Ascending aorta (tissue), 2 donors: ENCODE measurements at regions of chr16 and their contacts with region 1.

Region 1: GRCh38 chr16:10181196-10182162 is 749 bp downstream of the GRIN2A start:
- DNase-seq: peak in 1 of 2 donors; percentile 75
- H3K4me3 ChIP-seq: peak overlapping the region; percentile 32 to 59
- H3K27ac ChIP-seq: no peak overlapping the region
- H3K4me1 ChIP-seq: peaks cover 0 to 21% of the 10 kb centered on the region in 2 donors
- H3K27me3 ChIP-seq: no peaks in the 10 kb centered on the region
- CTCF ChIP-seq: peak; percentile 86 to 96 (median 89)

Region 2: GRCh38 chr16:9297437-9298113 is 883.9 kb before region 1 on chr16:
- intact Hi-C with region 1: loop called (anchors 2 kb)
- DNase-seq: no peak
- H3K4me3 ChIP-seq: no peak overlapping the region
- H3K27ac ChIP-seq: no peak overlapping the region
- H3K4me1 ChIP-seq: no peaks in the 10 kb centered on the region
- H3K27me3 ChIP-seq: no peaks in the 10 kb centered on the region
- CTCF ChIP-seq: peak in 2 of 3 experiments; percentile 52 to 83

Region 3: GRCh38 chr16:9647981-9648712 is 533.3 kb before region 1 on chr16:
- intact Hi-C with region 1: loop called (anchors 2 kb)
- DNase-seq: no peak
- H3K4me3 ChIP-seq: no peak overlapping the region
- H3K27ac ChIP-seq: no peak overlapping the region
- H3K4me1 ChIP-seq: no peaks in the 10 kb centered on the region
- H3K27me3 ChIP-seq: no peaks in the 10 kb centered on the region
- CTCF ChIP-seq: peak; percentile 22 to 71 (median 46)

Region 4: GRCh38 chr16:9929313-9929712 is 252.2 kb before region 1 on chr16:
- intact Hi-C with region 1: loop called (anchors 10 kb)
- DNase-seq: no peak
- H3K4me3 ChIP-seq: no peak overlapping the region
- H3K27ac ChIP-seq: no peak overlapping the region
- H3K4me1 ChIP-seq: peaks cover 0 to 5% of the 10 kb centered on the region in 2 donors
- H3K27me3 ChIP-seq: no peaks in the 10 kb centered on the region
- CTCF ChIP-seq: no peak

Region 5: DNA sequence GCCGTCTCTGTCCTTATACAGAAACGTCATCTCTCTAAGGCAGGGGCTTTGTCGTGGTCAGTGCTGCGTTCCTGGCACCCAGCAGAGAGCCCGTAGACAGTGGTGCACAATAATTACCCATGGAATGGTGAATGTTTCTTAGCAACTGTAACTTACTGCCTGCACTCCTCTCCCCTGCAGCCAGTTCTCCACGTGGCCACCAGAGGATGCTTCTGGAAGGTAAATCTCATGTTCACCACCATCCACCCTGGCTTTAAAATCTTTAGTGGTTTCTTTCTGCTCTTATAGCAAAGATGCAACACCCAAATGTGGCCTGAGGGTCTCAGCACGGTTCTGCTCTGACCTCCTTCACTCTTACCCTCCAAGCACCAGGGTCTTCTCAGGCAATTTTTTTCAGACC is 150.0 kb before region 1 on chr16:
- intact Hi-C with region 1: loop called (anchors 1 kb)
- DNase-seq: no peak
- H3K4me3 ChIP-seq: no peak overlapping the region
- H3K27ac ChIP-seq: no peak overlapping the region
- H3K4me1 ChIP-seq: no peaks in the 10 kb centered on the region
- H3K27me3 ChIP-seq: no peaks in the 10 kb centered on the region
- CTCF ChIP-seq: peak in 1 of 3 experiments; percentile 31